PC-9 (cell line): ENCODE measurements at regions of chr17 and their contacts with region 1.

Region 1: GRCh38 chr17:79027925-79028813 is 4.2 kb downstream of the C1QTNF1 start:
- DNase-seq: peak in 1 of 2 experiments; percentile 35
- H3K4me3 ChIP-seq: no peak overlapping the region
- H3K27ac ChIP-seq: no peak overlapping the region
- H3K4me1 ChIP-seq: peaks cover 37% of the 10 kb centered on the region
- H3K27me3 ChIP-seq: no peaks in the 10 kb centered on the region
- CTCF ChIP-seq: no peak

Region 2: DNA sequence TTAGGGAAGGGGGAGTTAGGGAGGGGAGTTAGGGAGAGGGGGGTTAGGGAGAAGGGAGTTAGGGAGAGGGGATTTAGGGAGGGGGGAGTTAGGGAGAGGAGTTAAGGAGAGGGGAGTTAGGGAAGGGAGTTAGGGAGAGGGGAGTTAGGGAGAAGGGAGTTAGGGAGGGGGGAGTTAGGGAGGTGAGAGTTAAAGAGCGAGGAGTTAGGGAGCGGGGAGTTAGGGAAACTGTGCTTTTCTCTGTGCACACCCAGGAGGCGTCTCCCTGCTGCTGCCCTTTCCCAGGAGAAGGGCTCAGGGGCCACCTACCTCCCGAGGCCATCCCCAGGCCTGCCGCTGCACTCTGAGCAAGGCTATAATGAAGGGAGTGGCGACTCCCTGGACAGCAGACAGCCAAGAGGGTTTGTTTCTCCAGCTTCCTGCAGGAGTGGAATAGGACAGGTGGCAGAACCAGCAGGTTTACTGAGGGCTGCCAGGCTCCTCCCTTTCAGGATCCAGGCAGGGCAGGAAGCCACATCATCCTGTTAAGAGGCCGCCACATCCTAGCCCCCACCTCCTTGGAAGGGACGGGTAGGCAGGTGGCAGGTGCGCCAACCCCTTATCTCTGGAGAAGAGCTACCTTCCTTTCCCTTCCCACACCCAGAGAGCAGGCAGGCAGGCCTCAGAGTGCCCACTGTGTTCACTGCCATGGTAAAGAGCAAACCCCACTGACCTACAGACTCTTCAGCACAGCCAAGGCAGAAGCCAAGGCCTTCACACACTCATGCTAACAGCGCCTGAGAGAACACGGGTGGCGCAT is 22.9 kb before region 1 on chr17:
- CTCF ChIA-PET with region 1: no interaction called
- POLR2A ChIA-PET with region 1: interaction called, 3 read pairs
- intact Hi-C with region 1: loop called (anchors 2 kb)
- DNase-seq: peak; percentile 85 to 89
- H3K4me3 ChIP-seq: peak overlapping the region; percentile 16; the same call in 1 of the 2 replicates
- H3K27ac ChIP-seq: peak overlapping the region; percentile 76
- H3K4me1 ChIP-seq: peaks cover 40% of the 10 kb centered on the region
- H3K27me3 ChIP-seq: no peaks in the 10 kb centered on the region
- CTCF ChIP-seq: no peak

Region 3: GRCh38 chr17:79294459-79295071 is 266.4 kb after region 1 on chr17:
- CTCF ChIA-PET with region 1: no interaction called
- POLR2A ChIA-PET with region 1: no interaction called
- intact Hi-C with region 1: no loop called
- DNase-seq: peak in 1 of 2 experiments; percentile 35
- H3K4me3 ChIP-seq: no peak overlapping the region
- H3K27ac ChIP-seq: no peak overlapping the region
- H3K4me1 ChIP-seq: no peaks in the 10 kb centered on the region
- H3K27me3 ChIP-seq: peaks cover 70% of the 10 kb centered on the region
- CTCF ChIP-seq: no peak